Activated CD8-positive, alpha-beta T cell treated with anti-CD3 and anti-CD28 coated beads, Interleukin-2, amount 10 ng/mL, durations not matched to agents 7 days and 5 days (primary cell): ENCODE measurements at regions of chr2 and their contacts with region 1.

Region 1: DNA sequence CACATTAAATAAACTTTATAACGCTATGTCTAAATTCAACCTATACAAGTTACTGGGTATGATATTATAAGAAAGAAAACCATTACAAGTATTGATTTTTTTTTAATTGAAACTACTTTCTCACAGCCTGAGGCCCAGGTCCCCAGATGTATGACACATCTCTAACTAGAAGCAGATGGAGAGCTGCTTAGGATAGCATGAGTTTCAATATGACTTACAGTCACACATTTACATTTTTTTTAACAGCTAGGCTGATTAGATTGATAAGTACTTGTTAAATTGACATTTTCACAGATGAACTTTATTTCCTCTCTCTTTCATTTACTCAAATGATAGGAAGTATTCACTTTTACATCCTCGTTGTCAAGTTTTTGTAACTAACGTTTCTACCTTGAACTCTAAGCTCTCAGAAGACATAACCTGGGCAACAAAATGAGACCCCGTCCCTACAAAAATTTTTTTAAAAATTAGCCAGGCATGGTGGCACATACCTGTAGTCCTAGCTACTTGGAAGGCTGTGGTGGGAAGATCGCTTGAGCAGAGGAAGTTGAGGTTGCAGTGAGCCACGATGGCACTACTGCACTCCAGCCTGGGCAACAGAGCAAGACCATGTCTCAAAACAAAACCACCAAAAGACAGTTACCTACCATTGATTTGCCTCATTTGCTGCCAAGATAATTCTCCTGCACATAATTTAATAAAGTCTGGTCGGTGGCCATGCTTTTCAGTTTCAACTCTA is 52.4 kb downstream of the STK39 start:
- DNase-seq: peak; percentile 54
- ATAC-seq: peak; percentile 82
- H3K4me3 Mint-ChIP-seq: peak overlapping the region; percentile 57
- H3K27ac Mint-ChIP-seq: peak overlapping the region; percentile 95
- H3K4me1 Mint-ChIP-seq: peaks cover 73% of the 10 kb centered on the region
- H3K27me3 Mint-ChIP-seq: no peaks in the 10 kb centered on the region

Region 2: GRCh38 chr2:168107322-168107721 is 87.6 kb before region 1 on chr2:
- CTCF ChIA-PET with region 1: no interaction called
- POLR2A ChIA-PET with region 1: no interaction called
- DNase-seq: no peak
- ATAC-seq: no peak
- H3K4me3 Mint-ChIP-seq: no peak overlapping the region
- H3K27ac Mint-ChIP-seq: no peak overlapping the region
- H3K4me1 Mint-ChIP-seq: no peaks in the 10 kb centered on the region
- H3K27me3 Mint-ChIP-seq: no peaks in the 10 kb centered on the region

Region 3: DNA sequence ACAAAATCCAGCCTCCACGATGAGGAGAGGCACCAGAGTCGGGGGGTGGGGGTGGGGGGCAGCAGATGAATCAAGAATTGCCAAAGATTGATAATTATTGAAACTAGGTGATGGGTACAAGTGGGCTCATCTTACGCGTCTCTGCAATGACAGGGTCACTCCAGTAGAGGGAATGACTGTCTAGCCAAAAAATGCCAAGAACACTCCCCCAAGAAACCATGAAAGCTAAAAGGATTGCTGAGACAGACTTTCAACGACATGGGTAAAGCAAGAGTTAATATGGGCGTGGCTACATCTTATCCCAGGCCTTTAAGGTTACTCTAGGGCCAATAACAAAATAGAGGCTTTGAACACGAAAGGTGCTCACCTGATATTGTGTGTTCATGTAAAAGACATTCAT is 34.1 kb before region 1 on chr2:
- CTCF ChIA-PET with region 1: interaction called, 12 read pairs
- POLR2A ChIA-PET with region 1: no interaction called
- DNase-seq: no peak
- ATAC-seq: no peak
- H3K4me3 Mint-ChIP-seq: no peak overlapping the region
- H3K27ac Mint-ChIP-seq: no peak overlapping the region
- H3K4me1 Mint-ChIP-seq: peaks cover 19% of the 10 kb centered on the region
- H3K27me3 Mint-ChIP-seq: no peaks in the 10 kb centered on the region

Region 4: GRCh38 chr2:168181825-168182224 is 13.1 kb before region 1 on chr2:
- CTCF ChIA-PET with region 1: interaction called, 11 read pairs
- POLR2A ChIA-PET with region 1: no interaction called
- DNase-seq: no peak
- ATAC-seq: no peak
- H3K4me3 Mint-ChIP-seq: no peak overlapping the region
- H3K27ac Mint-ChIP-seq: peak overlapping the region; percentile 23
- H3K4me1 Mint-ChIP-seq: peaks cover 60% of the 10 kb centered on the region
- H3K27me3 Mint-ChIP-seq: no peaks in the 10 kb centered on the region

Region 5: GRCh38 chr2:168210895-168211570 is 16.1 kb after region 1 on chr2:
- CTCF ChIA-PET with region 1: interaction called, 5 read pairs
- POLR2A ChIA-PET with region 1: interaction called, 10 read pairs
- DNase-seq: no peak
- ATAC-seq: peak; percentile 63
- H3K4me3 Mint-ChIP-seq: peak overlapping the region; percentile 6
- H3K27ac Mint-ChIP-seq: peak overlapping the region; percentile 10
- H3K4me1 Mint-ChIP-seq: peaks cover 41% of the 10 kb centered on the region
- H3K27me3 Mint-ChIP-seq: no peaks in the 10 kb centered on the region

Region 6: DNA sequence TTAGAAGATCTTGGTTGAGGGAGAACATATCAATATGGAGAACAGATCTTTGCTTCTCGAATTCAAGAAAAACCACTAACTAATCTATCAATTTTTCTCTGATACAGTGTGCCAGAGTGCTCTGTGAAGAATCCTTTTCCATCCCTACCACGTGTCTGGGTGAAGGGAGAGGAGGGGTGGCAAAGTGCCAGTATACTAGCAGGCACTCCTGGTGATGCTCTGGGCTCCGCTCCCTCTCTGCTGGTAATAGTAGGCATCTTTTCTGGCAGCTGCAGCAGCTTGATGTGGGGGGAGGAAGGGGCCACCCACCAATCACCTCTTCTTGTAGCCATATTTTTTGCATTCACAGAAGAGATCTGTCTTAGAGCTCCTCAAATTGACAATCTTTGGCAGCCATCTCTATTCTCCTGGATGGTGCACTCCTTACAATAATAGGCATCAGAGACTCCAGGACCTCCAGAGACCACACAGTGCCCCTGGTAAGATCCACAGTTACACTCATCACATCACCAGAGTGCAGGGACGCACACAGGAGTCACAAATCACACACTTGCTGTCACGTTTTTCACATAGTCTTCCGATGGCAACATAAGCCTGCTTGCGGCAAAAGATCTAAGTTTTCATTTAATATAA is 36.8 kb after region 1 on chr2:
- CTCF ChIA-PET with region 1: no interaction called
- POLR2A ChIA-PET with region 1: no interaction called
- DNase-seq: no peak
- ATAC-seq: no peak
- H3K4me3 Mint-ChIP-seq: no peak overlapping the region
- H3K27ac Mint-ChIP-seq: no peak overlapping the region
- H3K4me1 Mint-ChIP-seq: peaks cover 16% of the 10 kb centered on the region
- H3K27me3 Mint-ChIP-seq: no peaks in the 10 kb centered on the region